B cell (primary cell): ENCODE measurements at regions of chrX and their contacts with region 1.

Region 1: GRCh38 chrX:55717521-55718497 is at the start of gene RRAGB:
- DNase-seq: peak; percentile 94
- ATAC-seq: peak; percentile 95
- H3K4me3 ChIP-seq: peak within 1 kb of the TSS; percentile 66 to 74 (median 70)
- H3K4me3 Mint-ChIP-seq: peak within 1 kb of the TSS; percentile 91
- H3K27ac ChIP-seq: peak within 1 kb of the TSS; percentile 90 to 94
- H3K27ac Mint-ChIP-seq: peak within 1 kb of the TSS; percentile 93
- H3K4me1 ChIP-seq: peaks cover 9 to 15% of the 10 kb centered on the region in 2 donors
- H3K4me1 Mint-ChIP-seq: peaks cover 29% of the 10 kb centered on the region
- H3K27me3 ChIP-seq: no peaks in the 10 kb centered on the region
- H3K27me3 Mint-ChIP-seq: no peaks in the 10 kb centered on the region
- CTCF ChIP-seq: peak; percentile 72
- total RNA-seq, gene RRAGB: 21.3 and 22.3 TPM in 2 replicates

Region 2: DNA sequence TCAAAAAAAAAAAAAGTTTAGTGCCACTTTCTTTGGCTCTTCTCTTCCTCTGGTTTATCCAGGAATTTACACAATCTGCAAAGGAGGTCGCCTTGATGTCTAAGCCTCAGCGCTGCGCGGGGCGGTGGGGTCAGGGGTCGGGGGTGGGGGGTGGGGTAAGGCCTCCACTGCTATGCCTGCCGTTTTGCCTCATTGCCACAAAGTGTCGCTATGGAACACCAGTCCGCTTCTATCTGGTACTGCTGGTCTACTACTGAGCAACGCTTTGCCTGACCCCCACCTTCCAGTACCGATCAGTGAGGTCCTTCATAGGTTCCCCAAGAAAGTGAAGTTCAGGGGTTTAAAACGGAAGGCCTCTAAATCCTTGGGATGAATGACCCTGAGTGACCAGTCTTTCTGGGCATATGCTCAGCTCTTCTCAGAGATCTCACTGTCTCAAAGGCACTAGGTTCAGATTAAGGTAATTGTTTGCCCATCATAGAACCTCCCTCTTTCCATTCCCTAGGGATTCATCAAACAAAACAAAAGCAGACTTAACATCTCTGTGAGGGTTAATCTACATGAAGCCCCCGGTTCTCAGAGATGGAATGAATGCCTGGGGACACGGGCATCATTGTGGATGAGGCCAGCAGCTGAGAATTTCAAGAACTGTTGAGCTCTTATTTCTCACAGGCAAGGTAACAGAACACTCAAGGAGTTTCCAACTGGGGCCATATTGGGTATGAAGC is 1294.5 kb before region 1 on chrX:
- CTCF ChIA-PET with region 1: no interaction called
- POLR2A ChIA-PET with region 1: no interaction called
- intact Hi-C with region 1: no loop called
- DNase-seq: peak; percentile 15
- ATAC-seq: no peak
- H3K4me3 ChIP-seq: no peak overlapping the region
- H3K4me3 Mint-ChIP-seq: no peak overlapping the region
- H3K27ac ChIP-seq: no peak overlapping the region
- H3K27ac Mint-ChIP-seq: no peak overlapping the region
- H3K4me1 ChIP-seq: no peaks in the 10 kb centered on the region
- H3K4me1 Mint-ChIP-seq: no peaks in the 10 kb centered on the region
- H3K27me3 ChIP-seq: no peaks in the 10 kb centered on the region
- H3K27me3 Mint-ChIP-seq: peaks cover 3% of the 10 kb centered on the region
- CTCF ChIP-seq: no peak

Region 3: DNA sequence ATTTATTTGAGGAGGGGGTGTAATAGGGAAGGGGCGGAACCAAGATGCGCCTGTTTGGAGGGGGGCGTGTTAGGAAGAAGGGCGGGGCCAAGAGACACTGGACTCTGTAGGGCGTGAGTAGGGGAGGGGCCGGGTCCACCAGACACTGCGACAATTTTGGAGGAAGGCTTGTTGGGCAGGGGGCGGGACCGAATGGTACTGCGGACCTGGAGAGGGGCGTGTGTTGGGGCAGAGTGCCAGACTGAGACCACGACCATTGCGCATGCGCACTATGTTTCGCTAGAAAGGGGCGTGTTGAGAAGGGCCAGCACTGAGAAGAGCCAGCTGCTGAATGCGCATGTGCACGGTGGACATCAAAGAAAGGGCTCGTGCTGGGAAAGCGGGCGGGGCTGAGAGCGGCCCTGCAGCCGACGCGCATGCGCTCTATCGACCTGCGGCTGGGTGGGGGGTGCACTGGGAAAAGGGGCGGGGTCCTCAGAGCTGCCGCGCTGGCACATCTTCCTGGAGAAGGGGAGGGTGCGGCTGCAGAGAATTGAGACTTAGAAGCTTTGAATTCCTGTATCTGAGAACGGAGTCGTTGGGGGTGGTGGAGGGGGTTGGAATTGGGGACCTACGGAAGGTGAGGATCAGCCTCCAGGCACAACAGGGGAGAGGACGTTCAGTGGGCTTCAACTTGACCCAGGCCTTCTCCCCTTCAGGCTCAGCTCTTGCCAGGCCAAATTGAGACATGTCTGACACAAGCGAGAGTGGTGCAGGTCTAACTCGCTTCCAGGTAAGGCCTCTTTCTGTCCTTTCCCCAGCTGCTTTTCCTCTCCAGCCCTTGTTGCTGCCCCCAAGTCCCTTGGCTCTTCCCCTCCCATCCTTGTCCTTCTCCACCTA is 909.0 kb before region 1 on chrX:
- CTCF ChIA-PET with region 1: no interaction called
- POLR2A ChIA-PET with region 1: no interaction called
- intact Hi-C with region 1: loop called (anchors 5 kb)
- DNase-seq: peak; percentile 92
- ATAC-seq: peak; percentile 92
- H3K4me3 ChIP-seq: peak overlapping the region in 4 of 5 experiments; percentile 67 to 81 (median 76)
- H3K4me3 Mint-ChIP-seq: peak overlapping the region; percentile 96
- H3K27ac ChIP-seq: peak overlapping the region; percentile 64 to 82
- H3K27ac Mint-ChIP-seq: peak overlapping the region; percentile 93
- H3K4me1 ChIP-seq: peaks cover 8 to 16% of the 10 kb centered on the region in 2 donors
- H3K4me1 Mint-ChIP-seq: peaks cover 5% of the 10 kb centered on the region
- H3K27me3 ChIP-seq: no peaks in the 10 kb centered on the region
- H3K27me3 Mint-ChIP-seq: no peaks in the 10 kb centered on the region
- CTCF ChIP-seq: no peak

Region 4: GRCh38 chrX:55648434-55648833 is 69.4 kb before region 1 on chrX:
- CTCF ChIA-PET with region 1: no interaction called
- POLR2A ChIA-PET with region 1: no interaction called
- intact Hi-C with region 1: loop called (anchors 1 kb)
- DNase-seq: peak; percentile 13
- ATAC-seq: no peak
- H3K4me3 ChIP-seq: no peak overlapping the region
- H3K4me3 Mint-ChIP-seq: peak overlapping the region; percentile 35
- H3K27ac ChIP-seq: peak overlapping the region; percentile 67 to 79
- H3K27ac Mint-ChIP-seq: peak overlapping the region; percentile 93
- H3K4me1 ChIP-seq: peaks cover 22 to 33% of the 10 kb centered on the region in 2 donors
- H3K4me1 Mint-ChIP-seq: peaks cover 41% of the 10 kb centered on the region
- H3K27me3 ChIP-seq: no peaks in the 10 kb centered on the region
- H3K27me3 Mint-ChIP-seq: no peaks in the 10 kb centered on the region
- CTCF ChIP-seq: no peak

Region 5: DNA sequence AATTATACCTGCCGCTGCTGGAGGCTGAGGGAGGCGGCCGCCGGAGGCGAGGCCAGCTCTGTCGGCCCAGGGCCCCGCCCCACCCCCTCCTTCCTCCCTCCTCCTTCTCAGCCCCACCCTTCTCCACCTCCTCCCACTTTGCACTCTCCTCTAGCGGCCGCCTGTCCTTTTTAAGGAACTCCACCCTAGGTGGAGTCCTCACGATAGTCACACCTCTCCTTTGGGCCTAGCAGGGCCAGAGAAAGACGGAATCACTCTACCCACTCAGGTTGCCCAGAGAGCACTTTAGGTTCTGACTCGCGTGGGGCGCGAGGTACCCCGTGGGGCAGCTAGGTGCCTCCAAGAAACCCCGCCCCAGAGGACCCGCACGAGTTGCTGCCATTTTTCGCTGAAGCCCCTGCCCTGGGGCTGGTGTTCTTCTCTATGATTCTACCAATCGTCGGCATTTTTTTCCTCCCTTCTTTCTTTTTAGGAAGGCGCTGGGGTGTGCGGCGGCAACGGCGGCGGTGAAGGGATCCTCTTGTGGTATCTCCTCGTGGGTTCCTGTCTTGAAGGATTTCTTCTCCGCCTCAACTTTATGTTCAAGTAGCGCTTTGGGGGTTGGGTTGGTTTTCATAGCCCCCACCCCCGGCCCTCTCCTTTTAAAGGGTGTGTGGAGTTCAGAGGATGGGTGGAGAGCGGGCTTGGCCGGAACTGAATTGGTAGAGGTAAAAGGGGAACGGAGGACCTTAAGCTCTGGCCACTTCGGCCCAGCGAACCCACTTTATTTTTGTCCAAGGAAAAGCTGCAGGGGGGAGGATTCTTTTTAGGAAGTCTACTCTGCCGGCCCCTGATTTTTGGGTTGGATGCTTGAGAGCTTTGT is 514.6 kb after region 1 on chrX and contains the start of gene KLF8:
- CTCF ChIA-PET with region 1: interaction called, 4 read pairs
- POLR2A ChIA-PET with region 1: no interaction called
- intact Hi-C with region 1: loop called (anchors 2 kb)
- DNase-seq: peak; percentile 64
- ATAC-seq: peak; percentile 80
- H3K4me3 ChIP-seq: peak within 1 kb of the TSS; percentile 11 to 76 (median 58)
- H3K4me3 Mint-ChIP-seq: peak within 1 kb of the TSS; percentile 88
- H3K27ac ChIP-seq: peak within 1 kb of the TSS; percentile 50 to 64
- H3K27ac Mint-ChIP-seq: peak within 1 kb of the TSS; percentile 90
- H3K4me1 ChIP-seq: peaks cover 19 to 25% of the 10 kb centered on the region in 2 donors
- H3K4me1 Mint-ChIP-seq: peaks cover 37% of the 10 kb centered on the region
- H3K27me3 ChIP-seq: no peaks in the 10 kb centered on the region
- H3K27me3 Mint-ChIP-seq: no peaks in the 10 kb centered on the region
- CTCF ChIP-seq: no peak
- total RNA-seq, gene KLF8: 42.7 and 43.1 TPM in 2 replicates

Region 6: GRCh38 chrX:56563231-56564161 is 845.7 kb after region 1 on chrX and contains the start of gene UBQLN2:
- CTCF ChIA-PET with region 1: interaction called, 3 read pairs
- POLR2A ChIA-PET with region 1: no interaction called
- intact Hi-C with region 1: loop called (anchors 5 kb)
- DNase-seq: peak; percentile 82
- ATAC-seq: peak; percentile 85
- H3K4me3 ChIP-seq: peak within 1 kb of the TSS; percentile 65 to 85 (median 75)
- H3K4me3 Mint-ChIP-seq: peak within 1 kb of the TSS; percentile 93
- H3K27ac ChIP-seq: peak within 1 kb of the TSS; percentile 88 to 92
- H3K27ac Mint-ChIP-seq: peak within 1 kb of the TSS; percentile 97
- H3K4me1 ChIP-seq: peaks cover 11 to 15% of the 10 kb centered on the region in 2 donors
- H3K4me1 Mint-ChIP-seq: peaks cover 25% of the 10 kb centered on the region
- H3K27me3 ChIP-seq: no peaks in the 10 kb centered on the region
- H3K27me3 Mint-ChIP-seq: no peaks in the 10 kb centered on the region
- CTCF ChIP-seq: no peak
- total RNA-seq, gene UBQLN2: 33.8 and 35.3 TPM in 2 replicates